Vagina (tissue), 2 donors: ENCODE measurements at regions of chr11 and their contacts with region 1.

Region 1: DNA sequence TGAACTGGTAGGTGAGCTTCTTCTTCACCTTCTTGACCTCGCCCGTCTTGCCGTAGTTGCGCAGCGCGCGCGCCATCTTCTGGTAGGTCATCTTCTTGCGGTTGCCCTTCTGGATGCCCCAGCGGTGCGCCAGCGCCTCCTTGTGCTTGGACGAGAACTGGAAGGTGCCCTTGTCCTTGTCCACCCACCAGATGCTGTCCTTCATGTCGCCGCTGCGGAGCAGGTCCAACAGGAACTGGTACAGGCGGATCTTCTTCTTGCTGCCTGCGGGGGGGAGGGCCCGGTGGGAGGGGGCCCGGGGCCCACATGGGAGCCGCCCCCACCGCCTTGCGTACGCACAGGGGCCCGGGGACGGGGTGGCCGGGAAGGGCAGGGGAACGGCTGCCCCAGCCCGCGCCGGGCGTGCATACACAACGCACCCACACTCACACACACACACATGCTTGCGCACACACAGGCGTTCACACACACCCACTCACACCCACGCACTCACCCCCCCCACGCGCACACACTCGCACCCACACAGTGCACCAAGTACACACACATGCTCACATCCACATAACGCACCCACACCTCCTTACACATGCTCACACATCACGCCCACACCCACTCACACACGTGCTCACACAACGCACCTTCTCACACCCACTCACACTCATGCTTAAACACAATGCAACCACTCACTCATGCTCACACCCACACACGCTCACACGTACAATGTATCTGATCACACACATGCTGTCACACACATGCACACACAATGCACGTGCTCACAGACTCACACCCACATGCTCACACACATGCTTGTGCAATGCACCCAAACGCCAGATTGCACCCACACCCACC is 3.0 kb upstream of the MYBPC3 start:
- DNase-seq: no peak
- H3K4me3 ChIP-seq: peak overlapping the region; percentile 48 to 50
- H3K27ac ChIP-seq: peak overlapping the region; percentile 64
- H3K4me1 ChIP-seq: peaks cover 13% of the 10 kb centered on the region
- H3K27me3 ChIP-seq: no peaks in the 10 kb centered on the region
- CTCF ChIP-seq: peak; percentile 80 to 91 (median 86)
- POLR2A ChIP-seq: no peak

Region 2: DNA sequence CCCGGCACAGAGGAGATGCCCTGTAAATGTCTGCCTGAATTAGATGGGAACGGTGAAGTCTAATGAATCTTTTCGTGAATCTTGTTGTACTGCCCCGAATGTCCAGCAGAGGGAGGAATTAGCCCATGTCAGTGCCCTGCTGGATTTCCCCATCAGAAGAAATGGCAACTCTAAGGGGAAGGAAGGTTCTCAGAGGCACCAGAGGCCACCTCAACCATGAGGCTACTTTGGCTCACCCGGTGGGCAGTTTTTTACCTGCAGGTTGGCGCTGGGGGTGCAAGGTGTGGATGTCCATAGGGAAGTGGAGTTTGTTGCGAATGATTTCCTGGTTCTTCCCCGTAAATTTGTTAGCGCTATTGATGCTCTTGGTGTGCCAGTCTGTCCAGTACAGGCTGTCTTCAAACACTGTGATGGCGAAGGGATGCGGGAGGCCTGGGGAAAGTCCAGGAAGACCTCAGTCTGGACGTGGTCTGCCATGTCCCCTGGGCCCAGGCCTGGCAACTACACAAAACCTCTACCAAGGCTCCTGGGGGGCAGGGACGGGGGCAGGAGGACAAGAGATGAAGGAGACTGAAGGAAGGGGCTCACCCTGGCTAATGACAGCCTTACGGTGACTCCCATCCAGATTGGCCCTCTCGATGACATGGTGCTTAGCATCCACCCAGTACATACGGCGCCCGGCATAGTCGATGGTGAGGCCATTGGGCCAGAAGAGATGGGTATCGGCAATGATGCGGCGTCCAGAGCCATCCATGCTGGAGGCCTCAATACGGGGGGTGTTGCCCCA is 465.6 kb before region 1 on chr11:
- intact Hi-C with region 1: loop called (anchors 10 kb)
- DNase-seq: no peak
- H3K4me3 ChIP-seq: no peak overlapping the region
- H3K27ac ChIP-seq: no peak overlapping the region
- H3K4me1 ChIP-seq: no peaks in the 10 kb centered on the region
- H3K27me3 ChIP-seq: no peaks in the 10 kb centered on the region
- CTCF ChIP-seq: peak; percentile 72 to 94 (median 88)
- POLR2A ChIP-seq: no peak

Region 3: GRCh38 chr11:47176328-47177228 is 178.9 kb before region 1 on chr11 and contains the start of gene ARFGAP2:
- intact Hi-C with region 1: loop called (anchors 5 kb)
- DNase-seq: peak in 1 of 2 donors; percentile 97
- H3K4me3 ChIP-seq: peak within 1 kb of the TSS; percentile 81 to 96
- H3K27ac ChIP-seq: peak within 1 kb of the TSS; percentile 98
- H3K4me1 ChIP-seq: peaks cover 53% of the 10 kb centered on the region
- H3K27me3 ChIP-seq: no peaks in the 10 kb centered on the region
- CTCF ChIP-seq: no peak
- POLR2A ChIP-seq: peak in 1 of 2 donors; percentile 18
- total RNA-seq, gene ARFGAP2: 79.3 TPM

Region 4: GRCh38 chr11:47269002-47269828 is 86.3 kb before region 1 on chr11:
- intact Hi-C with region 1: no loop called
- DNase-seq: peak in 1 of 2 donors; percentile 92
- H3K4me3 ChIP-seq: peak overlapping the region; percentile 71 to 84
- H3K27ac ChIP-seq: peak overlapping the region; percentile 94
- H3K4me1 ChIP-seq: peaks cover 43% of the 10 kb centered on the region
- H3K27me3 ChIP-seq: no peaks in the 10 kb centered on the region
- CTCF ChIP-seq: peak in 1 of 3 experiments; percentile 26
- POLR2A ChIP-seq: no peak

Region 5: GRCh38 chr11:47285969-47286770 is 69.3 kb before region 1 on chr11:
- intact Hi-C with region 1: loop called (anchors 10 kb)
- DNase-seq: no peak
- H3K4me3 ChIP-seq: no peak overlapping the region
- H3K27ac ChIP-seq: no peak overlapping the region
- H3K4me1 ChIP-seq: no peaks in the 10 kb centered on the region
- H3K27me3 ChIP-seq: no peaks in the 10 kb centered on the region
- CTCF ChIP-seq: no peak
- POLR2A ChIP-seq: no peak